ENCODE measurements at regions of chrX and their contacts with region 1.

Region 1: DNA sequence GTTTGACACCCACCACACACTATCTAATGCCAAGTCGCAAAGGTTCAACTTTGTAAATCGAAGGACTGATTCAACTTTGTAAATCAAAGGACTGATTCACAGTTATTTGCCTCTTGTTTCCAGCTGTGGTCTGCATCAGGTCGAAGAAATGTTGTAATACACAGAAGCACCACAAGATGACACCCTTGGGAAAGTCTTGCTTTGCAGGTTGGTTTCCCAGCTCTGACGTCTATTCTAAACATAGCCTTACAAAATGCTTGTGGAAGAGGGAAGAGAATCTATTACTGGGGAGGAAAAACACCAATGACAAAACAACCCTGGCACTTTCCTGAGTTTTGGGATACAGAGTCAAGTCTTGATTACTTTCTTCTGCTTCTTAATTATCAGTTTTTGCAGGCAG is 35.3 kb downstream of the SUPT20HL1 start:
- DNase-seq: no peak
- ATAC-seq: peak; percentile 88
- H3K4me3 ChIP-seq: no peak overlapping the region
- H3K27ac ChIP-seq: peak overlapping the region in 1 of 2 donors; percentile 65
- H3K4me1 ChIP-seq: peaks cover 3 to 5% of the 10 kb centered on the region in 2 donors
- H3K27me3 ChIP-seq: no peaks in the 10 kb centered on the region

Region 2: GRCh38 chrX:24464836-24465531 is 69.2 kb after region 1 on chrX and contains the start of gene PDK3:
- intact Hi-C with region 1: loop called in 1 of 2 experiments (anchors 10 kb)
- DNase-seq: peak; percentile 92 to 95
- ATAC-seq: peak; percentile 95
- H3K4me3 ChIP-seq: peak within 1 kb of the TSS; percentile 53 to 56
- H3K27ac ChIP-seq: peak within 1 kb of the TSS; percentile 68 to 83
- H3K4me1 ChIP-seq: peaks cover 0 to 3% of the 10 kb centered on the region in 2 donors
- H3K27me3 ChIP-seq: no peaks in the 10 kb centered on the region
- total RNA-seq, gene PDK3: 62.1 to 119 TPM

Region 3: GRCh38 chrX:24498975-24499374 is 103.2 kb after region 1 on chrX:
- intact Hi-C with region 1: loop called (anchors 2 kb)
- DNase-seq: no peak
- ATAC-seq: no peak
- H3K4me3 ChIP-seq: no peak overlapping the region
- H3K27ac ChIP-seq: no peak overlapping the region
- H3K4me1 ChIP-seq: no peaks in the 10 kb centered on the region
- H3K27me3 ChIP-seq: no peaks in the 10 kb centered on the region

Region 4: DNA sequence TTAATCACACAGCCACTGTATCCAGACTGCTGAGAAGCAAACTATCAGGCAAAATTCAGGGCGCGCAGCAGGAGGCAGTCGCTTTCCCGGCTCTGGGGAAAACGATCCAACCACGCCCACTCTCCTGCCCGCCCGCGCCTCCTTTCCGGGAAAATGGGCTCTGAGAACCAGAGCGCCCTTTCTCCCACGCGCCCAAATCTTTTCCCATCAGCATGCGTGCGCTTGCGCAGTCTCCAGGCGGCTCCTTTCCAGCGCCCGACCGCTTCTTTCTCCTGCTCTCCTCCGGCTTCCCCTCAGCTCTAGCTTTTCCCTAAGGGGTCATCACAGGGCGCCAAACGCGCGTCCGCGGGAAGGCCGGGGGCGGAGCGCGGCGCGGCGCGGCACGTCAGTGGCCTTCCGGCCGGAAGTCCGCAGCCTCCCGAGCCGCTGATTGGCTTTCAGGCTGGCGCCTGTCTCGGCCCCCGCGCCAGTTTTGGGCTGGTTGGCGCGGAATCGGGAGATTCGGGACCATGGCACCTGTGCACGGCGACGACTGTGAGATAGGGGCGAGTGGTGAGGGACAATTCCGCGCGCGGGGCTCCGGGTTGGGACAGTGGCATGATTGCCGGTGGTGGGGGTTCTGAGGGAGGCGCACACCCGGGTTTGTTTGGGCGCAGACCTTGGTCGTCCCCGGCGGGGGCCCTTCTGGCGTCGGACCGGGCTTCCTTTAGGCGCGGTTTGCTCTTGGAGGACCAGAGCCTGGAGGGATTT is 297.9 kb after region 1 on chrX and contains the start of gene POLA1:
- intact Hi-C with region 1: loop called (anchors 10 kb)
- DNase-seq: peak; percentile 96
- ATAC-seq: peak; percentile 98
- H3K4me3 ChIP-seq: peak within 1 kb of the TSS; percentile 4 to 74
- H3K27ac ChIP-seq: peak within 1 kb of the TSS in 1 of 2 donors; percentile 94
- H3K4me1 ChIP-seq: no peaks in the 10 kb centered on the region
- H3K27me3 ChIP-seq: no peaks in the 10 kb centered on the region
- total RNA-seq, gene POLA1: 10.4 to 15.6 TPM

Region 5: GRCh38 chrX:25144043-25144940 is 748.5 kb after region 1 on chrX:
- intact Hi-C with region 1: loop called in 1 of 2 experiments (anchors 10 kb)
- DNase-seq: peak; percentile 73 to 80
- ATAC-seq: peak; percentile 63
- H3K4me3 ChIP-seq: peak overlapping the region; percentile 4 to 11
- H3K27ac ChIP-seq: no peak overlapping the region
- H3K4me1 ChIP-seq: no peaks in the 10 kb centered on the region
- H3K27me3 ChIP-seq: no peaks in the 10 kb centered on the region